ENCODE measurements at regions of chr15 and their contacts with region 1.

Region 1: GRCh38 chr15:80031841-80032240 is 27.6 kb upstream of the ZFAND6 start:
- DNase-seq: no peak
- ATAC-seq: peak; percentile 51
- H3K4me3 Mint-ChIP-seq: peak overlapping the region; percentile 55
- H3K27ac Mint-ChIP-seq: no peak overlapping the region
- H3K4me1 Mint-ChIP-seq: peaks cover 41% of the 10 kb centered on the region
- H3K27me3 Mint-ChIP-seq: no peaks in the 10 kb centered on the region
- CTCF ChIP-seq: no peak

Region 2: GRCh38 chr15:80002267-80002666 is 29.6 kb before region 1 on chr15:
- CTCF ChIA-PET with region 1: no interaction called
- POLR2A ChIA-PET with region 1: interaction called, 12 read pairs
- intact Hi-C with region 1: no loop called
- DNase-seq: no peak
- ATAC-seq: no peak
- H3K4me3 Mint-ChIP-seq: no peak overlapping the region
- H3K27ac Mint-ChIP-seq: no peak overlapping the region
- H3K4me1 Mint-ChIP-seq: peaks cover 11% of the 10 kb centered on the region
- H3K27me3 Mint-ChIP-seq: no peaks in the 10 kb centered on the region
- CTCF ChIP-seq: no peak

Region 3: GRCh38 chr15:80010131-80010673 is 21.6 kb before region 1 on chr15:
- CTCF ChIA-PET with region 1: no interaction called
- POLR2A ChIA-PET with region 1: interaction called, 10 read pairs
- intact Hi-C with region 1: no loop called
- DNase-seq: no peak
- ATAC-seq: peak; percentile 56
- H3K4me3 Mint-ChIP-seq: peak overlapping the region; percentile 57
- H3K27ac Mint-ChIP-seq: peak overlapping the region; percentile 87
- H3K4me1 Mint-ChIP-seq: peaks cover 73% of the 10 kb centered on the region
- H3K27me3 Mint-ChIP-seq: no peaks in the 10 kb centered on the region
- CTCF ChIP-seq: no peak

Region 4: GRCh38 chr15:80019168-80019745 is 12.6 kb before region 1 on chr15:
- CTCF ChIA-PET with region 1: no interaction called
- POLR2A ChIA-PET with region 1: interaction called, 16 read pairs
- intact Hi-C with region 1: loop called (anchors 1 kb)
- DNase-seq: no peak
- ATAC-seq: no peak
- H3K4me3 Mint-ChIP-seq: peak overlapping the region; percentile 87
- H3K27ac Mint-ChIP-seq: peak overlapping the region; percentile 98
- H3K4me1 Mint-ChIP-seq: peaks cover 73% of the 10 kb centered on the region
- H3K27me3 Mint-ChIP-seq: no peaks in the 10 kb centered on the region
- CTCF ChIP-seq: no peak

Region 5: GRCh38 chr15:80052597-80053300 is 20.9 kb after region 1 on chr15:
- CTCF ChIA-PET with region 1: no interaction called
- POLR2A ChIA-PET with region 1: interaction called, 7 read pairs
- intact Hi-C with region 1: loop called (anchors 2 kb)
- DNase-seq: no peak
- ATAC-seq: peak; percentile 56
- H3K4me3 Mint-ChIP-seq: no peak overlapping the region
- H3K27ac Mint-ChIP-seq: peak overlapping the region; percentile 46
- H3K4me1 Mint-ChIP-seq: peaks cover 30% of the 10 kb centered on the region
- H3K27me3 Mint-ChIP-seq: no peaks in the 10 kb centered on the region
- CTCF ChIP-seq: no peak

Region 6: DNA sequence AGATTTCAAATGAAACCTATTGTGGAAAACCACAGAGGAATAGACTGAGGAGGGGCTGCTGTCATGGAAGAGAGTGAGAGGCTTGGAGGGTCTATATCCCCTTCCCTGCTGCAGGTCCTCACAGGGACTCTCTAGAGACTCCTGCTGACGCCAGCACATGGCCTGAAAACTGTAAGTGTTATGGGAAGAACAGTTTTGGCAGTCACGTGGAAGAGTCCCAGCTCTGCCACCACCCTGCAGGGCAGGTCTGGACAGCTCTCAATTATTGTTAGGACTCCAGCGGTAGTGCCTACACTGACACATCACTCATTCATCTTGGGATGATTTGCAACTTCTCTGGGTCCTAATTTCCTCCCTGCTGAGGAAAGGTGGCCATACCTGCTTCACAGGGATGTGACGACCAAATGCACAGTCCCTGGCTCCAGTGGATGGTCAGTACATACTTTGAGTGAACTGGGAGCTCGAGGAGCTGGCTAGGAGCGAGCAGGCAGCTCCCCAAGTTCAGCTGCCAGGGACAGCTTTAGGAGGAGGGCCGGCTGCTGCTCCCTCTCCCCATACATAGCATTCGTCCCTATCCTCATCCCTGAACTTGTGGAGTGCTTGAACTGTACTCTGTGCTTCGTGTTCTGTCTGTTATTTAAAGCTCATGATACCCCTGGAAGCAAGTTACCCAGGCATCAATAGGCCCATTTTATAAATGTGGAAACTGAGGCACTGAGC is 171.0 kb after region 1 on chr15:
- CTCF ChIA-PET with region 1: no interaction called
- POLR2A ChIA-PET with region 1: no interaction called
- intact Hi-C with region 1: no loop called
- DNase-seq: no peak
- ATAC-seq: no peak
- H3K4me3 Mint-ChIP-seq: no peak overlapping the region
- H3K27ac Mint-ChIP-seq: no peak overlapping the region
- H3K4me1 Mint-ChIP-seq: no peaks in the 10 kb centered on the region
- H3K27me3 Mint-ChIP-seq: peaks cover 28% of the 10 kb centered on the region
- CTCF ChIP-seq: no peak

Measured in activated B cell treated with CpG ODN at 0.5 μM for 24 hours (primary cell).